CD4-positive, alpha-beta memory T cell (primary cell): ENCODE measurements at regions of chr2 and their contacts with region 1.

Region 1: DNA sequence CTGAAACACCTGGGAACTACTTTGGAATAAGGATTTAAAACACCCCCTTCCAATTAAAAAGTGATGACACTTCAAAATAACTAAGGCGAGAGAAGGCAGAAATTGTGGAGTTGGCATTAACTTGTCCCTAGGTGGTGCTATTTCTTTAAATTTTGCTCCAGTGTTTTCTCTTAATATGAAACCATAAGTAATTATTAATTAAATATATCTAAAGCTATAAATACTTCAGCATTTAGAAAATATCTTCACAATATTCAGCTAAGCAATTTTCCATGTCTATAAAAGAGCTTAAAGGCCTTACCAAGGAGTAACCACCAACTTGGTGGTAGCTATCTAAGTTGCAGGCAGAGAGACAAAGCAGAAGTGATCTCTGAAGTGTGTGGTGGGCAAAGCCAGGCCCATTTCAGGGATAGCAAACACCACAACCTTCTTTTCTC is 186.8 kb upstream of the PGAP1 start:
- DNase-seq: peak in 4 of 5 donors; percentile 38 to 49 (median 44)
- H3K4me3 ChIP-seq: no peak overlapping the region
- H3K4me3 Mint-ChIP-seq: no peak overlapping the region
- H3K27ac ChIP-seq: no peak overlapping the region
- H3K27ac Mint-ChIP-seq: peak overlapping the region; percentile 30 to 91 (median 75)
- H3K4me1 ChIP-seq: peaks cover 4% of the 10 kb centered on the region
- H3K4me1 Mint-ChIP-seq: peaks cover 16 to 31% (median 24%) of the 10 kb centered on the region in 4 donors
- H3K27me3 ChIP-seq: no peaks in the 10 kb centered on the region
- H3K27me3 Mint-ChIP-seq: no peaks in the 10 kb centered on the region

Region 2: DNA sequence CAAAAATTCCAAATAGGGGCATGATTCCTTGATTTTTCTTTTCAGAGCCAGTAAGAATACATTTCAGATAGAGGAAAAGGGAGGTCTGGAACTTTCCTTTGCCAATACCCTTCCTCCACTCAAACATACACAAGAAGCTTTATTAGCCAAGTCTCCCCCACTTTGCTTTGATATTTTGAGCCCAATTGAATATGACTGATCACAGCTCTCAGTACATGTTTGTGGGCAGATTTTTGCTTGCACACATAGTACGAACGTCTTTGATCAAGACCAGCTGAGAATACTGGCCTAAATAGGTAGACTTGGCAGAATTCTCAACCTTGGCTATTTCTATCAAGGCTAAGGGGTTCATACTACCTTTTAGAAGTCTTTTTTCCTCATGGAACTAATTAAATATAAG is 38.0 kb before region 1 on chr2:
- CTCF ChIA-PET with region 1: no interaction called
- POLR2A ChIA-PET with region 1: no interaction called
- intact Hi-C with region 1: no loop called
- DNase-seq: no peak
- H3K4me3 ChIP-seq: no peak overlapping the region
- H3K4me3 Mint-ChIP-seq: no peak overlapping the region
- H3K27ac ChIP-seq: no peak overlapping the region
- H3K27ac Mint-ChIP-seq: peak overlapping the region in 1 of 7 donors; percentile 52
- H3K4me1 ChIP-seq: peaks cover 43% of the 10 kb centered on the region
- H3K4me1 Mint-ChIP-seq: peaks cover 40 to 59% (median 47%) of the 10 kb centered on the region in 4 donors
- H3K27me3 ChIP-seq: no peaks in the 10 kb centered on the region
- H3K27me3 Mint-ChIP-seq: no peaks in the 10 kb centered on the region

Region 3: DNA sequence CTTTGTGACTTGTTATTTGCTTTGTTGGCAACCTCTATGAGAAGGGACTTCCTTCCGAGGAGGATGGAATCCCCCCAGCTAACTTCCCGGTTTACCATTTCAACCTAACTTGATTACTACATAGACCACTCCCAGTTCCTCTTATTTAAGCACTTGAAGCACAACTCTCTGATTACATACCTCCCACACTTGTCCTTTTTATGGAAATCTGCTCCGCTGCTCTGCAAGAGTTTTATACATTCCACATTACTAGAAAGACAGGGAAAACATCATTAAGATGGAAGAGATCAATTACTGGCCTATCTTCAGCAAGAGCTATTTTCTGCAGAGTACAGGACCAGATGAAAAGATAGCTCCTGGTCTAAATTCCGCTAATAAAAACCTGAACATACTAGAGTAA is 26.8 kb before region 1 on chr2:
- CTCF ChIA-PET with region 1: interaction called, 10 read pairs
- POLR2A ChIA-PET with region 1: no interaction called
- intact Hi-C with region 1: no loop called
- DNase-seq: no peak
- H3K4me3 ChIP-seq: no peak overlapping the region
- H3K4me3 Mint-ChIP-seq: no peak overlapping the region
- H3K27ac ChIP-seq: no peak overlapping the region
- H3K27ac Mint-ChIP-seq: peak overlapping the region; percentile 23 to 80 (median 60)
- H3K4me1 ChIP-seq: no peaks in the 10 kb centered on the region
- H3K4me1 Mint-ChIP-seq: peaks cover 0 to 18% (median 9%) of the 10 kb centered on the region in 4 donors
- H3K27me3 ChIP-seq: no peaks in the 10 kb centered on the region
- H3K27me3 Mint-ChIP-seq: no peaks in the 10 kb centered on the region

Region 4: GRCh38 chr2:197137231-197137630 is 23.9 kb after region 1 on chr2:
- CTCF ChIA-PET with region 1: interaction called, 44 read pairs
- POLR2A ChIA-PET with region 1: no interaction called
- intact Hi-C with region 1: no loop called
- DNase-seq: no peak
- H3K4me3 ChIP-seq: no peak overlapping the region
- H3K4me3 Mint-ChIP-seq: peak overlapping the region in 5 of 8 donors; percentile 35 to 77 (median 54)
- H3K27ac ChIP-seq: peak overlapping the region; percentile 6
- H3K27ac Mint-ChIP-seq: peak overlapping the region; percentile 71 to 88 (median 85)
- H3K4me1 ChIP-seq: peaks cover 92% of the 10 kb centered on the region
- H3K4me1 Mint-ChIP-seq: peaks cover 73 to 96% (median 84%) of the 10 kb centered on the region in 4 donors
- H3K27me3 ChIP-seq: no peaks in the 10 kb centered on the region
- H3K27me3 Mint-ChIP-seq: no peaks in the 10 kb centered on the region

Region 5: DNA sequence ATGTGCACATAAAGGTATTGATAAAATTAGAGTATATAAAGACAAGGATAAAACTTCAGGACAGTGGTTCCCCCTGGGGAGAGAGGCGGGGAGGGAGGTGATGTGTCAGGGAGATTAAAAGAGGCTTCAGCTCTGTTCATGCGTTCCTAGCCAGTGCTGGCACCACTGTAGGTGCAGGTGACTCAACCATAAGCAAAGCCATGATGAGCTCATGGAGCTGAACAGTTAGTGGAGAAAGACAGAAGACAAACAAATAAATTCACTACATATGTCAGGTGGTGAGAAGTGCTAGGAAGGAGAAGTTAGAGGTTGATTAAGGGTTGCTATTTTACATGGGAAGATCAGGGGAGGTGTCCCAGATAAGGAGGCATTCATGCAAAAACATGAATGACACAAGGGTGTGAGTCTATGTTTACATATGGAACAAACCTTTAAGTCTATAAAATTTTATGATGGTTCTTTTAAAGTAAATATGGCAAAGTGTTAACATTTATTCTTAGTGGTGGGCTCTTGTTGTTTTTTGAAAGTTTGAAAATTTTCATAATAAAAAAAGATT is 61.3 kb after region 1 on chr2:
- CTCF ChIA-PET with region 1: interaction called, 168 read pairs
- POLR2A ChIA-PET with region 1: no interaction called
- intact Hi-C with region 1: no loop called
- DNase-seq: no peak
- H3K4me3 ChIP-seq: no peak overlapping the region
- H3K4me3 Mint-ChIP-seq: peak overlapping the region in 2 of 8 donors; percentile 3 to 6
- H3K27ac ChIP-seq: no peak overlapping the region
- H3K27ac Mint-ChIP-seq: peak overlapping the region in 6 of 7 donors; percentile 4 to 78 (median 42)
- H3K4me1 ChIP-seq: peaks cover 73% of the 10 kb centered on the region
- H3K4me1 Mint-ChIP-seq: peaks cover 42 to 70% (median 56%) of the 10 kb centered on the region in 4 donors
- H3K27me3 ChIP-seq: no peaks in the 10 kb centered on the region
- H3K27me3 Mint-ChIP-seq: no peaks in the 10 kb centered on the region

Region 6: GRCh38 chr2:197198890-197199289 is 85.6 kb after region 1 on chr2:
- CTCF ChIA-PET with region 1: interaction called, 21 read pairs
- POLR2A ChIA-PET with region 1: interaction called, 11 read pairs
- intact Hi-C with region 1: no loop called
- DNase-seq: peak; percentile 93 to 97 (median 96)
- H3K4me3 ChIP-seq: no peak overlapping the region
- H3K4me3 Mint-ChIP-seq: peak overlapping the region; percentile 84 to 99 (median 91)
- H3K27ac ChIP-seq: peak overlapping the region; percentile 73
- H3K27ac Mint-ChIP-seq: peak overlapping the region; percentile 95 to 99 (median 96)
- H3K4me1 ChIP-seq: peaks cover 93% of the 10 kb centered on the region
- H3K4me1 Mint-ChIP-seq: peaks cover 74 to 96% (median 86%) of the 10 kb centered on the region in 4 donors
- H3K27me3 ChIP-seq: no peaks in the 10 kb centered on the region
- H3K27me3 Mint-ChIP-seq: no peaks in the 10 kb centered on the region

Region 7: GRCh38 chr2:197369228-197369932 is 256.1 kb after region 1 on chr2:
- CTCF ChIA-PET with region 1: interaction called, 18 read pairs
- POLR2A ChIA-PET with region 1: no interaction called
- intact Hi-C with region 1: no loop called
- DNase-seq: no peak
- H3K4me3 ChIP-seq: no peak overlapping the region
- H3K4me3 Mint-ChIP-seq: no peak overlapping the region
- H3K27ac ChIP-seq: no peak overlapping the region
- H3K27ac Mint-ChIP-seq: peak overlapping the region in 4 of 7 donors; percentile 28 to 72 (median 42)
- H3K4me1 ChIP-seq: peaks cover 11% of the 10 kb centered on the region
- H3K4me1 Mint-ChIP-seq: peaks cover 8 to 17% (median 12%) of the 10 kb centered on the region in 4 donors
- H3K27me3 ChIP-seq: no peaks in the 10 kb centered on the region
- H3K27me3 Mint-ChIP-seq: no peaks in the 10 kb centered on the region